K562 (cell line): ENCODE measurements at regions of chr2 and their contacts with region 1.

Region 1: GRCh38 chr2:138090330-138090729 is 126.1 kb downstream of the HNMT start:
- DNase-seq: peak; percentile 23 to 71 (median 52)
- ATAC-seq: peak; percentile 98
- H3K4me3 ChIP-seq: no peak overlapping the region
- H3K27ac ChIP-seq: no peak overlapping the region
- H3K4me1 ChIP-seq: peaks cover 0 to 8% of the 10 kb centered on the region in 2 experiments; a peak in 2 of 5 replicates
- H3K27me3 ChIP-seq: no peaks in the 10 kb centered on the region
- CTCF ChIP-seq: peak; percentile 68 to 94 (median 84)
- EP300 ChIP-seq: no peak
- POLR2A ChIP-seq: no peak
- RAD21 ChIP-seq: peak; percentile 95 to 99

Region 2: GRCh38 chr2:137865954-137866540 is 224.3 kb before region 1 on chr2:
- CTCF ChIA-PET with region 1: no interaction called
- POLR2A ChIA-PET with region 1: no interaction called
- in situ Hi-C with region 1: no loop called
- intact Hi-C with region 1: loop called (anchors 5 kb)
- DNase-seq: peak; percentile 45 to 68 (median 52)
- ATAC-seq: peak; percentile 93
- H3K4me3 ChIP-seq: no peak overlapping the region
- H3K27ac ChIP-seq: no peak overlapping the region
- H3K4me1 ChIP-seq: no peaks in the 10 kb centered on the region
- H3K27me3 ChIP-seq: no peaks in the 10 kb centered on the region
- CTCF ChIP-seq: peak; percentile 68 to 81 (median 74)
- EP300 ChIP-seq: no peak
- POLR2A ChIP-seq: no peak
- RAD21 ChIP-seq: peak; percentile 58 to 87

Region 3: DNA sequence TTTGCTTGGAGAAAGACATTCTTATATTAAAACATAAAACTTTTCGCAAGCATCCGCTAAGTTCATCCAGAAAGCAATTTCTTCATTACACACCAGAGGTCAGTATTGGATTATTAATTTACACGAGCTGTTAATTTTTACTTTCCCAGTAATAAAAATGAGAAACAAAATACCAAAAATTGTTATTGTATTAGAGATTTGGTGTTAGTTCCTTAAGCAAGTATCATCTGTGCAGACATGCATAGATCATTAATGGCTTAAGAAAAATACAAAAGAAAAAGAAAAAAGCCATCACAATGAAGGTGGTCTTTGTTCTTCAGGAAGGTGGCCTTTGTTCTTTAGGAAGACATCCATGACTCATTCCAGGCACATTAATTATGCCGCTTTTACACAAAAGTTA is 179.7 kb before region 1 on chr2:
- CTCF ChIA-PET with region 1: interaction called, 18 read pairs
- POLR2A ChIA-PET with region 1: no interaction called
- in situ Hi-C with region 1: no loop called
- intact Hi-C with region 1: loop called (anchors 1 kb)
- DNase-seq: peak in 2 of 4 experiments; percentile 7 to 21
- ATAC-seq: no peak
- H3K4me3 ChIP-seq: no peak overlapping the region
- H3K27ac ChIP-seq: no peak overlapping the region
- H3K4me1 ChIP-seq: no peaks in the 10 kb centered on the region
- H3K27me3 ChIP-seq: peaks cover 2 to 4% of the 10 kb centered on the region in 2 experiments; a peak in 1 of 5 replicates
- CTCF ChIP-seq: peak in 2 of 3 experiments; percentile 10 to 72; a peak in 4 of 6 replicates
- EP300 ChIP-seq: no peak
- POLR2A ChIP-seq: no peak
- RAD21 ChIP-seq: peak; percentile 72 to 81

Region 4: GRCh38 chr2:137947728-137948336 is 142.5 kb before region 1 on chr2:
- CTCF ChIA-PET with region 1: interaction called, 21 read pairs
- POLR2A ChIA-PET with region 1: interaction called, 4 read pairs
- in situ Hi-C with region 1: loop called (anchors 5 kb)
- intact Hi-C with region 1: loop called (anchors 1 kb)
- DNase-seq: peak; percentile 48 to 81 (median 58)
- ATAC-seq: peak; percentile 85
- H3K4me3 ChIP-seq: no peak overlapping the region
- H3K27ac ChIP-seq: no peak overlapping the region
- H3K4me1 ChIP-seq: peaks cover 4 to 19% of the 10 kb centered on the region in 2 experiments; a peak in 3 of 5 replicates
- H3K27me3 ChIP-seq: no peaks in the 10 kb centered on the region
- CTCF ChIP-seq: peak; percentile 67 to 85 (median 68)
- EP300 ChIP-seq: no peak
- POLR2A ChIP-seq: no peak
- RAD21 ChIP-seq: peak; percentile 93 to 97

Region 5: GRCh38 chr2:138373993-138374408 is 283.7 kb after region 1 on chr2:
- CTCF ChIA-PET with region 1: no interaction called
- POLR2A ChIA-PET with region 1: no interaction called
- in situ Hi-C with region 1: no loop called
- intact Hi-C with region 1: loop called (anchors 10 kb)
- DNase-seq: peak; percentile 12 to 42 (median 23)
- ATAC-seq: peak; percentile 72
- H3K4me3 ChIP-seq: no peak overlapping the region
- H3K27ac ChIP-seq: no peak overlapping the region
- H3K4me1 ChIP-seq: no peaks in the 10 kb centered on the region
- H3K27me3 ChIP-seq: no peaks in the 10 kb centered on the region
- CTCF ChIP-seq: peak; percentile 52 to 69 (median 54); a peak in 5 of 6 replicates
- EP300 ChIP-seq: no peak
- POLR2A ChIP-seq: no peak
- RAD21 ChIP-seq: peak; percentile 57 to 67